ENCODE measurements at regions of chr5 and their contacts with region 1.

Region 1: DNA sequence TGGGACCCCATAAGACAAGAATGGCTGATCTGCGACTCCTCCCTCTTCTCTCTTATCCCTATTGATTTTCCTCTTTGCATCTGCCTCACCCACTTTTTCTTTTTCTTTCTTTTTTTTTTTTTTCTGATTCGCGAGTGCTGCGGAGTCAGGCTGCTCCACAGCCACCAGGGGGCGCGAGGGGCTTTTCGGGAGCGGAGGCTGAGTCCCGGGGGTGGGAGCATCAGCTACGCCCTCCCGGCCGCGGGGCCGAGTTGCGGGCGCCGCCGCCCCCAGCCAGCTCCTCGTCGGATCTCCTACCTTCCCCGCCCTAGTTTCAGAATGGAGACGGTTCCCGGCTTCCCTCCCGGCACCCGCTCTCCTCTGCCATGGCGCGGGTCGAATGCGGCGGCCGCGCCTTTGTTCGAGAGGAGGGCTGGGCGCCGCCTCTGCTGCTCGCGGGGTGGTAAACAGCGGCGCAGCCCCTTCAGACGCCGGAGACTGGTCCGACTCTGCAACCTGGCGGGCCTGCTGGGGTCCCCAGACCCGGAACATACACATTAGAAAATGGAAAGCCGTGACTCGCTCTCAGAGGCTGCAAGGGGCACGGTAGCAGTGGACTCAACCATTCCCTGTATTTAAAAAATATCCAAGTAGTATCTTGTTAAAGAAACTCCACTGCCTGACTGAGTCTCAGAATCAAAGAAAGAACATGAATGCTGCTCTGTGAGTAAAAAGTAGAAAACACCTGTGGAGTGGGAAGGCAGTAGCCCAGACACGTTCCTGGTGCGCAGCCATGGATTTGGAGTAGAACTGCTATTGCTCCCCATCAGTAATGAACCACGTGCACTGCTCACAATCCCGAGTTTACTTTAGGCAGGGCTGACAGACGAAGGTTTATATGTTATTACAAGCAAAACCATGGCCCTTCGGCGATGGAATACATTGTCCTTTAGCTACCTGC is 55.7 kb downstream of the DPYSL3 start:
- DNase-seq: peak; percentile 85
- ATAC-seq: peak; percentile 89
- H3K4me3 ChIP-seq: peak overlapping the region; percentile 96
- H3K27ac ChIP-seq: peak overlapping the region; percentile 82
- H3K4me1 ChIP-seq: peaks cover 8% of the 10 kb centered on the region
- H3K27me3 ChIP-seq: no peaks in the 10 kb centered on the region; the same call in 1 of the 2 replicates
- CTCF ChIP-seq: peak; percentile 96
- POLR2A ChIP-seq: 0 out of 2 replicates have a peak, but pooled peaks have one; percentile 5
- RAD21 ChIP-seq: peak; percentile 84

Region 2: DNA sequence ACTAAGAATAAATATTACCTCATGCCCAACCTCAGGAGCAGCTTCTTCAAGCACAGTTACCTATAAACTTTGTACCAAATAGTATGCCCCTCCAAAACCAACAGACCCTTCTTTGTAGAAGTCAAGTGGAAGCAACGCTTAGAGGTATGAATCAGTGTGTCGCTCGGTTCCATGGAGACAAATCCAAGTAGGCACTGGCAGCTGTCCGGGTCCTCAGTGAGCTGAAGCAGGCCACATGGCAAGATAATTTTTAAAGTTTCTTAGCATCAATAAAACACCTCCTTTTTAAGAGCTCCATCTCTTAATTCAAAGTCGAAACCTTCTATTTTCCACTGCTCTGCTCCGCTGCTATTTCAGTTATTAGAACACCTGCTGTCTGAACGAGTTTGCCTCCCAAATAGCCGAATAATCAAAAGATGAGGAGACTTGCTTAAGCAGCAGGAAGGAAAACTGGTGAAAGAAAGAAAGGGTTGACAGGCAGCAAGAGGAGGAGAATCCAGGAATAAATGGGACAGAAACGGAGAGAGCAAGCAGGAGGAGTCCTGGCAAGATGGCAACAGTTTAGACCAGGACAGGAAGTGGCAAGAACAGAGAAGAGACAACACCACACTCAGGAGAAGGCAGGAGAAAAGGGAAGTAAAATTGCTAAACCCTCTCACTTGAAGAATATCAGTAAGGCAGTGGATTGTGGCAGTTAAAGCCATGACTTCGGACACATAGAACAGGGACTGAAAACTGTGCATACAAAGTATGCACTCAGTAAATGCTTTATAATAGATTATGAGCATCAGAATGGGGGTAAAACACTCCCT is 640.6 kb before region 1 on chr5:
- CTCF ChIA-PET with region 1: no interaction called
- POLR2A ChIA-PET with region 1: no interaction called
- dilution Hi-C with region 1: no loop called
- in situ Hi-C with region 1: no loop called
- intact Hi-C with region 1: no loop called
- DNase-seq: no peak
- ATAC-seq: no peak
- H3K4me3 ChIP-seq: no peak overlapping the region
- H3K27ac ChIP-seq: no peak overlapping the region
- H3K4me1 ChIP-seq: no peaks in the 10 kb centered on the region
- H3K27me3 ChIP-seq: no peaks in the 10 kb centered on the region
- CTCF ChIP-seq: no peak
- POLR2A ChIP-seq: no peak
- RAD21 ChIP-seq: no peak

Region 3: DNA sequence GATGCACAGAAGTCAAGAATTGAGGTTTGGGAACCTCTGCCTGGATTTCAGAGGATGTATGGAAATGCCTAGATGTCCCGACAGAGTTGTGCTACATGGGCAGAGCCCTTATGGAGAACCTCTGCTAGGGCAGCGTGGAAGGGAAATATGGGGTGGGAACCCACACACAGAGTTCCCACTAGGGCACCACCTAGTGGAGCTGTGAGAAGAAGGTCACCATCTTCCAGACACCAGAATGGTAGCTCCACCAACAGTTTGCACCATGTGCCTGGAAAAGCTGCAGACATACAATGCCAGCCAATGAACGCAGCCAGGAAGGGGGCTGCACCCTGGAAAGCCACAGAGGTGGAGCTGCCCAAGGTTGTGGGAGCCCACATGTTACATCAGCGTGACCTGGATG is 114.8 kb before region 1 on chr5:
- CTCF ChIA-PET with region 1: no interaction called
- POLR2A ChIA-PET with region 1: no interaction called
- dilution Hi-C with region 1: no loop called
- in situ Hi-C with region 1: no loop called
- intact Hi-C with region 1: no loop called
- DNase-seq: no peak
- ATAC-seq: no peak
- H3K4me3 ChIP-seq: no peak overlapping the region
- H3K27ac ChIP-seq: no peak overlapping the region
- H3K4me1 ChIP-seq: no peaks in the 10 kb centered on the region
- H3K27me3 ChIP-seq: peaks cover 2% of the 10 kb centered on the region; the same call in 1 of the 2 replicates
- CTCF ChIP-seq: no peak
- POLR2A ChIP-seq: no peak
- RAD21 ChIP-seq: no peak

Region 4: DNA sequence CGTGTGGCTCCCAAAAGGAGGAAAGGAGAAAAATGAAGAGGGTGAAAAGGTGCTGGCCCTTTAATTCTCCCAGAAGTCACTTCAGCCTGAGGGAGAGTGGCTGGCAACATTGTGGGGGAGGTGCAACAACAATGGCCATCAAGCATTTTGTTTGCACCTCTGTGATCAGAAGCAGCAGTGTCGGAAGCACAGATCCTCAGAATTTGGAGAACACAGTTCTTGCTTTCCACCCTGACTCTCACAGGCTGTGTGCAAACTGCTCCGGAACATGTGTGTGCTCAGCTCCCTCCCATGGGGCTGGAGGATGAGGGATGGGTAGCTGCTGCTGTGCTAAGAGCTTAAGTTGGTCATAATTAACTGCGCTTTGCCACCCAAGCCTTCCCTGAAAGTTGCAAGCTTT is 71.4 kb before region 1 on chr5:
- CTCF ChIA-PET with region 1: no interaction called
- POLR2A ChIA-PET with region 1: no interaction called
- dilution Hi-C with region 1: no loop called
- in situ Hi-C with region 1: no loop called
- intact Hi-C with region 1: no loop called
- DNase-seq: no peak
- ATAC-seq: peak; percentile 48; the same call in 1 of the 2 replicates
- H3K4me3 ChIP-seq: peak overlapping the region; percentile 30; the same call in 1 of the 2 replicates
- H3K27ac ChIP-seq: peak overlapping the region; percentile 28; the same call in 1 of the 2 replicates
- H3K4me1 ChIP-seq: no peaks in the 10 kb centered on the region; the same call in 1 of the 2 replicates
- H3K27me3 ChIP-seq: no peaks in the 10 kb centered on the region; the same call in 1 of the 2 replicates
- CTCF ChIP-seq: no peak
- POLR2A ChIP-seq: no peak
- RAD21 ChIP-seq: no peak

Region 5: DNA sequence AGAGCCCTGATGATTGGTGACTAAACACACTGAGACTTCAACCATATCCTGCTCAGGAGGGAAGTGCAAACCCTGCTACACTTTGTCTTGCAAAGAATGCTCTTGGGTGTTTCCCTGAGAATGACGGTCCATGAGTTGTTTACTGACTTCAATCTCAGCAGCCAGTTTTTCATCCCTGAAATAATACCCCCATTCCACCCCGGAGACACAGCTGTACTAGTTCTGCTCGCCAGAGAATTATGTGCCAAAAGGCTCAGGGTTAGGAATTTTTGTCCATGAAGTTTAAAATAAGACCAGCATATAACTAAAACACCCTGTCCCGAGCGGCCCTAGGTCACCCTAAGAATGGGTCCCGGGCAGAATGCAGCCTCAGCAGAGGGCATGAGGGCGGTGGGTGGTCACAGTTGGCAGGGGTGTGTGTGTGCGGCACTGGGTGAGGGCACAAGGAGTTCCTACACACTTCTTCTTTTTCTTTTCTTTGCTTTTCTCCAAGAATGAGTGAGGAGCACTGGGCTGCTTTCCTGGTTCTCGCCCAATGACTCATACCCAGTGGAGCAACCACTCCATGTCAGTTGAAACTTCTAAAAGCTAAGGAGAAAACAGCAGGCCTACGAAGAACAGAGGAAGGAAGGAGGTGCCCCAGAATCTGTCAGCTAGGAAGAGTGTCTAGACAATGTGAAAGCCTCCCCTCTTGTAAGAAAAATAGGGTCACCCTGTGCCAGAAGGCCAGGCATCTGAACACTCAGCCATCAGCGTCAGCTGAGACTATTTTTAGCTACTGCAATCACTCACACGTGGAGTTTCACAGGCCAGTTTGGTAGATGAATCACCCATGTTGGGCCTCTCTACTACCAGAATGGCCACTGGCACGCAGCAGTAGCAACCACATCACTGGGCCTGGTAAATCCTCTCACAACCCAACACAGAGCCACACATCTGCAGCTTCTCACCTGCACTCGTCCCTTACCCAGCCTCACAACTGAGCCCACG is 50.2 kb before region 1 on chr5:
- CTCF ChIA-PET with region 1: interaction called, 7 read pairs
- POLR2A ChIA-PET with region 1: no interaction called
- dilution Hi-C with region 1: no loop called
- in situ Hi-C with region 1: no loop called
- intact Hi-C with region 1: loop called (anchors 5 kb)
- DNase-seq: peak; percentile 99
- ATAC-seq: peak; percentile 81
- H3K4me3 ChIP-seq: peak overlapping the region; percentile 5; the same call in 1 of the 2 replicates
- H3K27ac ChIP-seq: peak overlapping the region; percentile 93
- H3K4me1 ChIP-seq: peaks cover 15% of the 10 kb centered on the region
- H3K27me3 ChIP-seq: no peaks in the 10 kb centered on the region
- CTCF ChIP-seq: no peak
- POLR2A ChIP-seq: peak; percentile 48; the same call in 1 of the 2 replicates
- RAD21 ChIP-seq: no peak; the same call in 1 of the 2 replicates

Region 6: GRCh38 chr5:147669169-147669869 is 215.2 kb after region 1 on chr5:
- CTCF ChIA-PET with region 1: no interaction called
- POLR2A ChIA-PET with region 1: no interaction called
- dilution Hi-C with region 1: no loop called
- in situ Hi-C with region 1: no loop called
- intact Hi-C with region 1: no loop called
- DNase-seq: no peak
- ATAC-seq: no peak
- H3K4me3 ChIP-seq: no peak overlapping the region
- H3K27ac ChIP-seq: no peak overlapping the region
- H3K4me1 ChIP-seq: no peaks in the 10 kb centered on the region
- H3K27me3 ChIP-seq: no peaks in the 10 kb centered on the region; the same call in 1 of the 2 replicates
- CTCF ChIP-seq: no peak
- POLR2A ChIP-seq: no peak
- RAD21 ChIP-seq: no peak

Measured in IMR-90 (cell line).